ENCODE measurements at regions of chr4 and their contacts with region 1.

Region 1: DNA sequence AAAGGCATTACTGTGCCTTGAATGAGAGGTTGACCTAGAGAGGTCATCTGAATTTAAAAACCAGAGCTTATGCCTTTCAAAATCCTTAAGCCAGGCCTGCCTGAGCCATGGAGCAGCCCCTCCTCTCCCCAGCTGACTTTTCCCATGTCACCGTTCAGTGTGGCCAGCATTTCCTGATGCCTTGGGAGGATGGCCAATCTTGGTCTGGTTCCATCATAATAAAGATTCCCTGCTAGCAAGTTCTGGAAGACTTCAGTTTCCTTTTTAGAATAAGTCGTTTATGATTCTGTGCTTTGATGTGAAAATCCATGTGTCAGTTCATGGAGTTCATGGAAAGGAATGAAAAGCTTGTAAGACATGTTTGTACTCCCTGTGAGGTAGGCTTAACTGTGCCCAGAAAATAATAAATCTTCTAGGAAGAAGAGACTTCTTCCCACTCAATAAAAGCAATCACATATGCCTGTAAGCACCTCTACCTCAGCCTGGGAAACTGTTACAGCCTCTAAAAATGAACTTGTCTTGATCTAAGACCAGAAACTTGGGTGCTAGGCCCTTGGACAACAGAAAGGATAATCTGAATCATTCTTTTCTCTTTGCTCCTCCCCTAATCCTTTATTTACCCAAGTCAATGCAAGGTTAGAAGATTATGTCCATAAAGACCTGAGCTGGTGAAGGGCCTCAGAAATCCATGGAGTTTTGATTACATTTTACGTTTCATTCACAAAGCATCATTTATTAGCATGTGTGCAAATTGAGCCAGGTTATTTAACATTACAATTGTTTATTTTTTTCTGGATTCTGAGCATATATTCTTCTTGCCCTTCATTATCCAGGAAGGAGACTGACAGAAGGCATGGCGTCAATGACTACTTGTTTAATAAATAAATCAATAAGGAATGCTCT is 84.0 kb upstream of the TBC1D9 start:
- DNase-seq: no peak
- H3K4me3 ChIP-seq: no peak overlapping the region
- H3K27ac ChIP-seq: no peak overlapping the region
- H3K4me1 ChIP-seq: no peaks in the 10 kb centered on the region
- H3K27me3 ChIP-seq: no peaks in the 10 kb centered on the region
- CTCF ChIP-seq: no peak
- POLR2A ChIP-seq: no peak

Region 2: GRCh38 chr4:140609548-140610425 is 230.4 kb before region 1 on chr4:
- intact Hi-C with region 1: loop called in 1 of 2 experiments (anchors 10 kb)
- DNase-seq: peak in 3 of 7 donors; percentile 13 to 27 (median 24)
- H3K4me3 ChIP-seq: no peak overlapping the region
- H3K27ac ChIP-seq: no peak overlapping the region
- H3K4me1 ChIP-seq: no peaks in the 10 kb centered on the region
- H3K27me3 ChIP-seq: no peaks in the 10 kb centered on the region
- CTCF ChIP-seq: peak; percentile 49 to 69 (median 60)
- POLR2A ChIP-seq: no peak